Panc1 (cell line): ENCODE measurements at regions of chr15 and their contacts with region 1.

Region 1: GRCh38 chr15:59725172-59725486 is 36.0 kb upstream of the BNIP2 start:
- DNase-seq: no peak
- ATAC-seq: no peak
- H3K4me3 ChIP-seq: no peak overlapping the region
- H3K27ac ChIP-seq: no peak overlapping the region
- H3K4me1 ChIP-seq: no peaks in the 10 kb centered on the region
- H3K27me3 ChIP-seq: peaks cover 2% of the 10 kb centered on the region; the same call in 1 of the 2 replicates
- CTCF ChIP-seq: peak; percentile 65; the same call in 1 of the 2 replicates

Region 2: GRCh38 chr15:59917504-59918157 is 192.5 kb after region 1 on chr15:
- CTCF ChIA-PET with region 1: no interaction called
- POLR2A ChIA-PET with region 1: no interaction called
- in situ Hi-C with region 1: no loop called
- intact Hi-C with region 1: loop called (anchors 10 kb)
- DNase-seq: peak; percentile 25
- ATAC-seq: peak; percentile 99
- H3K4me3 ChIP-seq: no peak overlapping the region
- H3K27ac ChIP-seq: no peak overlapping the region
- H3K4me1 ChIP-seq: no peaks in the 10 kb centered on the region
- H3K27me3 ChIP-seq: no peaks in the 10 kb centered on the region
- CTCF ChIP-seq: peak; percentile 78

Region 3: GRCh38 chr15:60179786-60180391 is 454.8 kb after region 1 on chr15:
- CTCF ChIA-PET with region 1: no interaction called
- POLR2A ChIA-PET with region 1: no interaction called
- in situ Hi-C with region 1: no loop called
- intact Hi-C with region 1: loop called (anchors 5 kb)
- DNase-seq: peak; percentile 20
- ATAC-seq: peak; percentile 89
- H3K4me3 ChIP-seq: no peak overlapping the region
- H3K27ac ChIP-seq: no peak overlapping the region
- H3K4me1 ChIP-seq: no peaks in the 10 kb centered on the region
- H3K27me3 ChIP-seq: no peaks in the 10 kb centered on the region
- CTCF ChIP-seq: peak; percentile 83

Region 4: GRCh38 chr15:60222404-60222803 is 497.3 kb after region 1 on chr15:
- CTCF ChIA-PET with region 1: interaction called, 11 read pairs
- POLR2A ChIA-PET with region 1: no interaction called
- in situ Hi-C with region 1: no loop called
- intact Hi-C with region 1: no loop called
- DNase-seq: no peak
- ATAC-seq: no peak
- H3K4me3 ChIP-seq: no peak overlapping the region
- H3K27ac ChIP-seq: no peak overlapping the region
- H3K4me1 ChIP-seq: no peaks in the 10 kb centered on the region
- H3K27me3 ChIP-seq: peaks cover 10% of the 10 kb centered on the region
- CTCF ChIP-seq: no peak